Activated CD4-positive, alpha-beta memory T cell treated with anti-CD3 and anti-CD28 coated beads, Interleukin-2, amount 10 ng/mL, durations not matched to agents 7 days and 5 days (primary cell): ENCODE measurements at regions of chr1 and their contacts with region 1.

Region 1: GRCh38 chr1:119870917-119871596 is 25.3 kb downstream of the ADAM30 start:
- DNase-seq: peak; percentile 75
- H3K4me3 Mint-ChIP-seq: no peak overlapping the region
- H3K27ac Mint-ChIP-seq: no peak overlapping the region
- H3K4me1 Mint-ChIP-seq: peaks cover 9% of the 10 kb centered on the region
- H3K27me3 Mint-ChIP-seq: peaks cover 43% of the 10 kb centered on the region

Region 2: DNA sequence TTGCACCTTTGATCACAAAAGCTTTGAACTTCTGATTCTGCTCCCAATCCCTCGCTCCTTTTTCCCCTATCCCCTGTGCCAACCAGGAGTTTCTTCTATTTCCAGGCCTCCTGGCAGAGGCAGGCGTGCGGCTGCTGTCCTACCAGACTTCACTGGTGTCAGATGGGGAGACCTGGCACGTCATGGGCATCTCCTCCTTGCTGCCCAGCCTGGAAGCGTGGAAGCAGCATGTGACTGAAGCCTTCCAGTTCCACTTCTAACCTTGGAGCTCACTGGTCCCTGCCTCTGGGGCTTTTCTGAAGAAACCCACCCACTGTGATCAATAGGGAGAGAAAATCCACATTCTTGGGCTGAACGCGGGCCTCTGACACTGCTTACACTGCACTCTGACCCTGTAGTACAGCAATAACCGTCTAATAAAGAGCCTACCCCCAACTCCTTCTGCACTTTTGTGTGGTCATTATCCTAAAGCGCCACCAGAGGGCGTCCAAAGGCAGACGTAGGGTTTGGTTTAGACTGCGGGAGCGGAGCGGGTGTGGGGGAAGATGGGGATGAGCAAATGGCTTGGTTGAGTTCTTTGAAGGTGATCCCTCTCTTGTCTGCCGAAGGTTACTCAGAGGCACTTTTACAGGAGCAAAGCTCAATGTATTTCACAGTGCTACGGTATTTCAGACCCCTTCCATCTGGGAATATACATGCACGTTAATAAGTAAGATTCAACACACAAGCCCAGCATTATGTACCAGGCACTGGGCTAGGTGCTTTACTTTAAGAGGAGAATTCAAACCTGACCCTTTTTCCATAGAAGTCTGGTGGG is 127.1 kb before region 1 on chr1:
- CTCF ChIA-PET with region 1: interaction called, 12 read pairs
- POLR2A ChIA-PET with region 1: no interaction called
- DNase-seq: peak; percentile 60
- H3K4me3 Mint-ChIP-seq: no peak overlapping the region
- H3K27ac Mint-ChIP-seq: no peak overlapping the region
- H3K4me1 Mint-ChIP-seq: peaks cover 6% of the 10 kb centered on the region
- H3K27me3 Mint-ChIP-seq: peaks cover 6% of the 10 kb centered on the region